ENCODE measurements at regions of chr5 and their contacts with region 1.

Region 1: DNA sequence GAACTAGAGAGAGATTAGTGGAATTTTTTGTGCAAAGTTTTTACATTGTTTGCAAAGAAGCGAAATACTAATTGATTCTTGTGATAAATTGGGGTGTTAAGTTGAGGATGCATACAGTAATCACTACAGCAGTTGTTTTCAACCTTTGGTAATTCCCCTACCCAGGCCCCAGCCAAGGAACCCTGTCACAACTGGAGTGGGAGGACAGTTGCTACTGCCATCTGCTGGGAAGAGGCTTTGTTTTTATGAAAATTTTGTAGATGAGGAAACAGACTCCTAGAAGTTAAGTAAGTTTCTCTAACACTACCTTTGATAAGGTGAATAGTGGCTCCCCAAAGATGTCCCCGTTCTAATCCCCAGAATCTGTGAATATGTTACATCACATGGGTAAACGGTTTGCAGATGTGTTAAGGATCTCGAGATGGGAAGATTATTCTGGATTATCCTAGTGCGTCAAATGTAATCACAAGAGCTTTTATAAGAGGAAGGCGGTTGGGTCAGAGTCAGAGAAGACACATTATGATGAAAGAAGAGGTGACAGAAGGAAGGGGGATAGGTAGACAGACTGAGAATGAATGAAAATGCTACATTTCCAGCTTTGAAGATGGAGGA is 34.0 kb upstream of the PPP1R2B start:
- DNase-seq: peak; percentile 12
- H3K4me3 ChIP-seq: no peak overlapping the region
- H3K27ac ChIP-seq: no peak overlapping the region
- H3K4me1 ChIP-seq: no peaks in the 10 kb centered on the region
- H3K27me3 ChIP-seq: no peaks in the 10 kb centered on the region
- CTCF ChIP-seq: peak; percentile 49

Region 2: GRCh38 chr5:155136216-155136850 is 1679.8 kb before region 1 on chr5:
- CTCF ChIA-PET with region 1: no interaction called
- POLR2A ChIA-PET with region 1: no interaction called
- intact Hi-C with region 1: loop called (anchors 5 kb)
- DNase-seq: no peak
- H3K4me3 ChIP-seq: no peak overlapping the region
- H3K27ac ChIP-seq: no peak overlapping the region
- H3K4me1 ChIP-seq: no peaks in the 10 kb centered on the region
- H3K27me3 ChIP-seq: no peaks in the 10 kb centered on the region
- CTCF ChIP-seq: no peak

Region 3: GRCh38 chr5:155616779-155617392 is 1199.2 kb before region 1 on chr5:
- CTCF ChIA-PET with region 1: no interaction called
- POLR2A ChIA-PET with region 1: no interaction called
- intact Hi-C with region 1: loop called (anchors 5 kb)
- DNase-seq: peak; percentile 47
- H3K4me3 ChIP-seq: no peak overlapping the region
- H3K27ac ChIP-seq: no peak overlapping the region
- H3K4me1 ChIP-seq: no peaks in the 10 kb centered on the region
- H3K27me3 ChIP-seq: no peaks in the 10 kb centered on the region
- CTCF ChIP-seq: peak; percentile 66

Region 4: DNA sequence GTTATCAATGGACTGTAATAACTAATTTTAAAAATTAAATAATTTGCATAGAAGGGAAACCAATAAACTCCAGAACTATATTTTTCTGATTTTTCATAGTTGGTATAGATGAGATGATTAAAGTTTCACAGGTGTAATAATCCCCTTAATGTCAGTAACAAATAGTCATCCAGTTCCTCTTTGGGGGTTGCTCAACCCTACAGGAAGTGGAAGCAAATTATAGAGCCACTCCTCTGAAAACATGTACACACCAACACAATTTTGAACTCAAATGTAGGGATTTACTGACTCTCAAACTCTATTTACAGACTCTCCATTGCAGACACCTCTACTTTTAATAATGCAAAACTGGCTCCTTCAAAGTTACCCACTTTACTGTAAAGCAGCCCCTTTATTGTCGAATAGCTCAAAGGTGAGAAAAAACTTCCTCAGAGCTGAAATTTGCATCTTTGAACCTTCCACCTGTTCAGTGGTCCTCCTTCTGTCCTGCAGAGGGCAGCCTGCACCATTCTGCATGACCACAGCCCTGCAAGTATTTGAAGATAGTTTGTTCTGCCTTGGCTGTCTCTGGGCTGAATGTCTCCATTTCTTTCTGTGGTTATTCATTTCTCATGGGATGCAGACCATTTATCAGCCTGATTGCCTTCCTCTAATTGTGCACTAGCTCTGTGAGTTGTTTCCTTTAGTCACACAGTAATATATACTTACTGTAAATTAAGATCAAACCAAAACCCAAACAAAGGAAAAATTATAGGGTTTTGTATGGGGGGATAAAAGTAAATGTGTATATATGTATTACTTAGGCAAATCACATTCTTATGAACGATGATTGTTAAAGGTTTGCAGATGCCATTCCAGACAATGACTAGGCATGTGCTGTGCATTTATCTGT is 872.3 kb before region 1 on chr5:
- CTCF ChIA-PET with region 1: no interaction called
- POLR2A ChIA-PET with region 1: no interaction called
- intact Hi-C with region 1: loop called (anchors 2 kb)
- DNase-seq: peak; percentile 30
- H3K4me3 ChIP-seq: no peak overlapping the region
- H3K27ac ChIP-seq: no peak overlapping the region
- H3K4me1 ChIP-seq: no peaks in the 10 kb centered on the region
- H3K27me3 ChIP-seq: no peaks in the 10 kb centered on the region
- CTCF ChIP-seq: peak; percentile 59

Measured in A673 (cell line).